ENCODE measurements at regions of chr6 and their contacts with region 1.

Region 1: DNA sequence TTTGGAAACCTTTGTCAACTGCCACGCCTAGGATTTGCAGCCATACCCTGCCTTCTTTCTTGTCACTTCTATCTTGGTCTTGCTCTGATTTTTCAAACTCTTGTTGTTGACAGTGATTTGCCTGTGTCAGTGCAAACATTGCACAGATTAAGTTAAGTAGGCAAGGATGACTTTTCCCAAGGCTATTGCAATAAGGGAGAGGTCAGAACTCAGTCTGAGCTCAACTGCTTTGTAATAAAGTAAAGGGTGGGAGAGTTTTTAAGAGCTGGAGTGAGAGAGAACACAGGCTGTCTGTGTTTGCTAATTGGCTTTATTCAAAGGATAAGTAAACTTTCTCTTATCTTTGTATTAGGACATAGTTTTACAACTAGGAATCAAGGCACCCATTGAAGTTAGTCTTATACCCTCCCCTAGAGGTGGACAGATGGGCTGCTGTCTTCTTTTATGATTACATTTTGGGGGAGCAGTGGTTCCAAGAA is 448.6 kb downstream of the PHF3 start:
- DNase-seq: peak; percentile 70 to 79
- H3K4me3 ChIP-seq: no peak overlapping the region
- H3K4me3 Mint-ChIP-seq: no peak overlapping the region
- H3K27ac Mint-ChIP-seq: peak overlapping the region; percentile 15
- H3K4me1 ChIP-seq: peaks cover 24% of the 10 kb centered on the region
- H3K4me1 Mint-ChIP-seq: peaks cover 26% of the 10 kb centered on the region
- H3K27me3 ChIP-seq: no peaks in the 10 kb centered on the region
- H3K27me3 Mint-ChIP-seq: no peaks in the 10 kb centered on the region
- CTCF ChIP-seq: peak; percentile 15 to 55

Region 2: DNA sequence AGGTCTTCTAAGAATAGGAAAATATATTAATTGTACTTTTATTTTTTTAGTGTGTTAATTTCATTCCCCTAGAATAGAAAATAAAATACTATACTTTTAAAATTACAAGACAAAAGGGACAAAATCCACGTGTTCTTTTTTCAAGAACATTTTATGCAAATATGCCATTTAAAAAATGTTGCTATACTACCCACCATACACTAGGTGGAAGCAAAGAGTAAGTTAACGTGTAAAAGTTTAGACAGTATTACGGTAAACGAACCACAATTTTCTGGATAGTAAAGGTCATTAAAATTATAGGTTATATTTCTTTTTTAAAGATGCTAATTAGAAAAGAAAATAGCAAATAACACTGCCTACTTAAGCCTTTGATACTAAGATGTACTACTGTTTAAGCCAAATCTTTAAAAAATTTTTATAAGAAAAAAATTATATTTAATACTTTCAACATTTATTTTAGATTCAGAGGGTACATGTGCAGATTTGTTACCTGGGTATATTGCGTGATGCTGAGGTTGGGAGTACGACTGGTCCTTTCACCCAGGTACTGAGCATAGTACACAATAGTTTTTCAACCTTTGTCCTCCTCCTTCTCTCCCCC is 161.0 kb before region 1 on chr6:
- CTCF ChIA-PET with region 1: no interaction called
- POLR2A ChIA-PET with region 1: no interaction called
- intact Hi-C with region 1: loop called (anchors 2 kb)
- DNase-seq: peak in 1 of 2 experiments; percentile 6
- H3K4me3 ChIP-seq: no peak overlapping the region
- H3K4me3 Mint-ChIP-seq: no peak overlapping the region
- H3K27ac Mint-ChIP-seq: no peak overlapping the region
- H3K4me1 ChIP-seq: no peaks in the 10 kb centered on the region
- H3K4me1 Mint-ChIP-seq: no peaks in the 10 kb centered on the region
- H3K27me3 ChIP-seq: no peaks in the 10 kb centered on the region
- H3K27me3 Mint-ChIP-seq: peaks cover 8% of the 10 kb centered on the region
- CTCF ChIP-seq: peak in 1 of 2 experiments; percentile 50

Region 3: DNA sequence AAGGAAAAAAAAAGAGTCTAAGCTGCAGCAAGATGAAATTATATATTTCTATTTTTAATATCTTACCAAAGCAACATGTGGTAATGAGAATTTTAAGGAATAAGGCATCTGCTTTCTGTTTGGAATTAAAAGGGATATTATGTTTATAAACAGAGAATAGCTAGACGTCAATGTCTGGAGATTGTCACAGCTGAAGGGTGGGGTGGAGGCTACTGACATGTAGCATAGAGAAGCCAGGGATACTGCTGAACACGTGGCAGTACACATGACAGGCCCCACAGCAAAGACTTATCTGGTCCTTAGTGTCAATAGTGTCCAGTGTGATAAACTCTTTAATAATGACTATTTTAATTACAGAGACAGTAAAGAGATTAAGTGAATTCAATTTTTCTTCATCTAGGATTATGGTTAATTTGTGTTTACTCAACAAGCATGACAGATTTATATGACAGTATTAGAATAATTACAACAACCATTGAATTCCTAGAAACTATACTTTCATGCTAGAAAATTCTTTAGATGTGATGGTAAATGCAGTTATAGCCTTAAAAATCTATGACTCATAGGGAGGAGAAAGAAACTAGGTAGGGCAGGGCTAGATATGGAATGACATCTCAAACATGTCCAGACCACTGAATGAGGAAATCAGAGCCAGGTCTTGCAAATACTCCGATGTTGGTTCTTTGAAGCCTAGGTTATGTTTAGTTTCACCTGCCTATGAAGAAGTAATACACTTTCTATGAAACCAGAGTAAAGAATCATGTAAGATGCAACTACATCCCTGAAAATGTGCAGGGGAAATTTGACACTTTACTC is 49.2 kb before region 1 on chr6:
- CTCF ChIA-PET with region 1: no interaction called
- POLR2A ChIA-PET with region 1: no interaction called
- intact Hi-C with region 1: loop called (anchors 1 kb)
- DNase-seq: peak in 1 of 2 experiments; percentile 31
- H3K4me3 ChIP-seq: no peak overlapping the region
- H3K4me3 Mint-ChIP-seq: no peak overlapping the region
- H3K27ac Mint-ChIP-seq: peak overlapping the region; percentile 42
- H3K4me1 ChIP-seq: peaks cover 16% of the 10 kb centered on the region
- H3K4me1 Mint-ChIP-seq: peaks cover 23% of the 10 kb centered on the region
- H3K27me3 ChIP-seq: no peaks in the 10 kb centered on the region
- H3K27me3 Mint-ChIP-seq: no peaks in the 10 kb centered on the region
- CTCF ChIP-seq: no peak

Region 4: GRCh38 chr6:64062960-64063683 is 21.1 kb before region 1 on chr6:
- CTCF ChIA-PET with region 1: no interaction called
- POLR2A ChIA-PET with region 1: no interaction called
- intact Hi-C with region 1: no loop called
- DNase-seq: no peak
- H3K4me3 ChIP-seq: no peak overlapping the region
- H3K4me3 Mint-ChIP-seq: no peak overlapping the region
- H3K27ac Mint-ChIP-seq: no peak overlapping the region
- H3K4me1 ChIP-seq: 0 out of 2 replicates have a peak, but pooled peaks cover 3% of the 10 kb centered on the region
- H3K4me1 Mint-ChIP-seq: peaks cover 9% of the 10 kb centered on the region
- H3K27me3 ChIP-seq: no peaks in the 10 kb centered on the region
- H3K27me3 Mint-ChIP-seq: no peaks in the 10 kb centered on the region
- CTCF ChIP-seq: no peak

Region 5: GRCh38 chr6:64250126-64250525 is 165.9 kb after region 1 on chr6:
- CTCF ChIA-PET with region 1: no interaction called
- POLR2A ChIA-PET with region 1: no interaction called
- intact Hi-C with region 1: loop called (anchors 2 kb)
- DNase-seq: no peak
- H3K4me3 ChIP-seq: no peak overlapping the region
- H3K4me3 Mint-ChIP-seq: no peak overlapping the region
- H3K27ac Mint-ChIP-seq: no peak overlapping the region
- H3K4me1 ChIP-seq: peaks cover 27% of the 10 kb centered on the region
- H3K4me1 Mint-ChIP-seq: peaks cover 37% of the 10 kb centered on the region
- H3K27me3 ChIP-seq: no peaks in the 10 kb centered on the region
- H3K27me3 Mint-ChIP-seq: no peaks in the 10 kb centered on the region
- CTCF ChIP-seq: no peak

Region 6: GRCh38 chr6:64301307-64302236 is 217.3 kb after region 1 on chr6:
- CTCF ChIA-PET with region 1: no interaction called
- POLR2A ChIA-PET with region 1: no interaction called
- intact Hi-C with region 1: loop called (anchors 1 kb)
- DNase-seq: peak; percentile 66 to 70
- H3K4me3 ChIP-seq: no peak overlapping the region
- H3K4me3 Mint-ChIP-seq: peak overlapping the region; percentile 27
- H3K27ac Mint-ChIP-seq: peak overlapping the region; percentile 50
- H3K4me1 ChIP-seq: peaks cover 21% of the 10 kb centered on the region
- H3K4me1 Mint-ChIP-seq: peaks cover 13% of the 10 kb centered on the region
- H3K27me3 ChIP-seq: no peaks in the 10 kb centered on the region
- H3K27me3 Mint-ChIP-seq: no peaks in the 10 kb centered on the region
- CTCF ChIP-seq: no peak